ENCODE measurements at regions of chr16 and their contacts with region 1.

Region 1: DNA sequence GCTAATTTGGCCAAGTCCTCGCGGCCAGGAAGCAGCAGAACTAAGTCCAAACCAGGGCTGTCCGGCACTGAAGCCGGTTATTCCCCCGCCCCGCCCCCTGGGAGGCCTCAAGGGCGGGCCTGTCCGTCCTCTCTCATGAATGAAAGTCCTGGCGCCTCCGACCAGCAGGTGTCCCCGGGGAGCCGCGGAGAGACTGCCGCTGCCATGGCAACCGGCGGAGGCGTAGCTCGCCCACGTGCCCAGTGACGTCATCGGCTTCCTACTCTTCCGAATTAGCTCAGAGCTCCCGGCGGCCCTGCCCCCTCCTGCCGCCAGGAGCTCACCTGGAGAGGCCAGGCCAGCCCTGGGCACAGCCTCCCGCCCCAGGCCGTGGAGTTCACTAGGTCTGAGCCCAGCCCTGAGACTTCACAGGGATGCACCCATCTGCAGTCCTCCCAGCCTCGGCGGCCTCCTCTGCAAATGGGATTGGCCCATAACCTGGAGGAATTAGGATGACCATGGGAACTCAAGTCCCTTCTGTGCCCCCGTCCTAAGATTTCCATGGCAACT is 1.3 kb downstream of the SPATA2L start:
- DNase-seq: peak; percentile 99
- ATAC-seq: peak; percentile 21
- H3K4me3 Mint-ChIP-seq: peak overlapping the region; percentile 71
- H3K27ac Mint-ChIP-seq: peak overlapping the region; percentile 25
- H3K4me1 Mint-ChIP-seq: peaks cover 13% of the 10 kb centered on the region
- H3K27me3 Mint-ChIP-seq: no peaks in the 10 kb centered on the region

Region 2: GRCh38 chr16:89193021-89193575 is 507.1 kb before region 1 on chr16:
- CTCF ChIA-PET with region 1: no interaction called
- POLR2A ChIA-PET with region 1: no interaction called
- intact Hi-C with region 1: loop called in 1 of 2 experiments (anchors 2 kb)
- DNase-seq: no peak
- ATAC-seq: peak; percentile 78
- H3K4me3 Mint-ChIP-seq: no peak overlapping the region
- H3K27ac Mint-ChIP-seq: no peak overlapping the region
- H3K4me1 Mint-ChIP-seq: no peaks in the 10 kb centered on the region
- H3K27me3 Mint-ChIP-seq: no peaks in the 10 kb centered on the region

Region 3: DNA sequence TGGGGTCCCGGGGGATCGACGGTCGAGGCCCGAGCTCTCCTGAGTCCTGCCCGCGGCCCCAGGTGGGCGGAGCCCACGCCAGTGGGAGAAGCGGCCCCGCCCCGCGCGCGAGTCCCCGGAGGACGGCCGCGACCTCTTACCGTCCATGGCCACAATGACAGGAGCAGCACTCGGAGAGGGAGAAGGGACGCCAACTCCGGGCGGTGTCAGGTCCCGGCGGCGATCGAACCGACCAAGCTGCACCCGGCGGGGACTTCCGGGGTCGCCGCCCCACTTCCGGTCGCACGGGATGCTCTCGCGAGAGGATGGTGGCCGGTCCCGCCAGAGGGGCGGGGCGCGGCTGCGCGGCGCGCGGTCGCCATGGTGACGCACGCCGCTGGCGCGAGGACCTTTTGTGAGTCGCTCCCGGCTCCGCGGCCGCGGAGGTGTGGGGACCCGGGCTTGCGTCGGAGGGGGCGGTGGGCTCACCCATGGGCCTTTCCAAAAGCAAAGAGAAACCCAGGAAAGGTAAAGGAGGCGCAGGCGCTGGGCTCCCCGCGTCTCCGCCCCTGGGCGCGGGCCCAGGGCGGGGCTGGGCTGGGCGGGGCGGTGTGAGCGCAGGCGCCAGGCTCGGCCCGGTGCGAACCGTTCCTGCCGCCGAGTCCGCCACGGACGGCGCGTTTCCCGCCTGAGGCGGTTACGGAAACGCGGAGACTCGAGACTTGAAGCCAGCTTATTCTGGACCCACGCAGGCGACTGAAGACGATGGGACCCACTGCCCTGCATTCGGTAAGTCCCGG is 42.5 kb before region 1 on chr16 and contains the starts of genes CHMP1A and SPATA33:
- CTCF ChIA-PET with region 1: interaction called, 5 read pairs
- POLR2A ChIA-PET with region 1: no interaction called
- intact Hi-C with region 1: loop called (anchors 1 to 5 kb)
- DNase-seq: peak; percentile 96
- ATAC-seq: peak; percentile 93
- H3K4me3 Mint-ChIP-seq: peak within 1 kb of the TSS; percentile 90
- H3K27ac Mint-ChIP-seq: peak within 1 kb of the TSS; percentile 83
- H3K4me1 Mint-ChIP-seq: peaks cover 28% of the 10 kb centered on the region
- H3K27me3 Mint-ChIP-seq: no peaks in the 10 kb centered on the region
- total RNA-seq, gene CHMP1A: 37.9 to 67.3 TPM
- total RNA-seq, gene SPATA33: 6.8 to 11.6 TPM

Region 4: GRCh38 chr16:89720813-89721545 is 20.8 kb after region 1 on chr16 and contains the starts of genes VPS9D1 and ZNF276:
- CTCF ChIA-PET with region 1: interaction called, 12 read pairs
- POLR2A ChIA-PET with region 1: interaction called, 3 read pairs
- intact Hi-C with region 1: loop called (anchors 1 kb)
- DNase-seq: peak; percentile 92
- ATAC-seq: peak; percentile 49
- H3K4me3 Mint-ChIP-seq: peak within 1 kb of the TSS; percentile 85
- H3K27ac Mint-ChIP-seq: peak within 1 kb of the TSS; percentile 84
- H3K4me1 Mint-ChIP-seq: peaks cover 40% of the 10 kb centered on the region
- H3K27me3 Mint-ChIP-seq: no peaks in the 10 kb centered on the region
- total RNA-seq, gene VPS9D1: 2.0 to 2.6 TPM
- total RNA-seq, gene ZNF276: 21.3 to 24.8 TPM

Region 5: GRCh38 chr16:89828199-89828778 is 128.1 kb after region 1 on chr16 and contains the start of gene SPIRE2:
- CTCF ChIA-PET with region 1: interaction called, 6 read pairs
- POLR2A ChIA-PET with region 1: no interaction called
- intact Hi-C with region 1: loop called in 1 of 2 experiments (anchors 1 kb)
- DNase-seq: peak; percentile 85
- ATAC-seq: peak; percentile 89
- H3K4me3 Mint-ChIP-seq: peak within 1 kb of the TSS; percentile 52
- H3K27ac Mint-ChIP-seq: no peak within 1 kb of the TSS
- H3K4me1 Mint-ChIP-seq: no peaks in the 10 kb centered on the region
- H3K27me3 Mint-ChIP-seq: peaks cover 13% of the 10 kb centered on the region
- total RNA-seq, gene SPIRE2: 1.1 to 1.5 TPM

Region 6: GRCh38 chr16:89972244-89973234 is 272.4 kb after region 1 on chr16:
- CTCF ChIA-PET with region 1: interaction called, 3 read pairs
- POLR2A ChIA-PET with region 1: no interaction called
- intact Hi-C with region 1: loop called in 1 of 2 experiments (anchors 1 kb)
- DNase-seq: peak; percentile 94
- ATAC-seq: peak; percentile 94
- H3K4me3 Mint-ChIP-seq: peak overlapping the region; percentile 99
- H3K27ac Mint-ChIP-seq: peak overlapping the region; percentile 95
- H3K4me1 Mint-ChIP-seq: peaks cover 32% of the 10 kb centered on the region
- H3K27me3 Mint-ChIP-seq: no peaks in the 10 kb centered on the region